H1 (cell line): ENCODE measurements at regions of chr20 and their contacts with region 1.

Region 1: DNA sequence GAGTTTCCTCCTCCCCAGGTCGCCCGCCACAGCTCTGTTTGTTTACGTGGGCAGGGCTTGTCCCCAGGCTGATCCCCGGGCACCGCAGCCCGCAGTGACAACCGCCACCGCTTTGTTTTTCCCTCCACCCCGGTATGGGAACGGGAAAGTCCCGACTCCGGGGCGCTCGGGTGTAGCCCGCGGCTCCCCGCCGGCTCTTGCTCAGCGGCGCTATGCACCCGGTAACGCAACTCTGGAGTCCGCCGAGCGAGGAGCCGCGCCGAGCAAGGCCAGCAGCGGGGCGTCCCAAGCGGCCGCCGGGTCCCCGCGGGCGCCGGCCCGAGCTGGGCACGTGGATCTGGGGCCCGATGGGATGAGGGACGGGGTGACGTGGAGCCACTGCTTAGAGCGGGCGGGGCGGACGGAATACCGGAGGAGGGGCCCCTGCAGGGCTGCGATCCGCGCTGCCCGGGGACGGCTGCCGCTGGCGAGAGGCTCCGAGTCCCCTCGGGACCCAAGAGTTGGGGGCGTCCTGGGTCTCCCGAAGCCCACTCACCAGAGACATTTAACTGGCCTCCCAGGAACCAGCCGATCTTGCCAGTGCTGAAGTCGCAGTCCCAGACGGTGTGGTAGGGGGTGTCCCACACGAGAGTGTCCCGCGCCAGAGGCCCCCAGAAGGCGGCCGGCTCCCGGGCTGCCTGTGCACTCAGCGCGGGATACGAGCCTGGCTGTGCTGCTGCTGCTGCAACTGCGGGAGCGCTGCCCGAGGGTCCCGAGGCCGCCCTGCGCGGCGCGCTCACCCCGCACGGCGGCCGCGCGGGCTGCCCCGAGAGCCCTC is 497 bp downstream of the ACSS1 start:
- DNase-seq: peak in 1 of 2 experiments; percentile 70
- H3K4me3 ChIP-seq: peak overlapping the region; percentile 26 to 64 (median 45)
- H3K27ac ChIP-seq: no peak overlapping the region
- H3K4me1 ChIP-seq: peaks cover 2 to 15% (median 6%) of the 10 kb centered on the region in 4 experiments
- H3K27me3 ChIP-seq: peaks cover 21 to 74% (median 60%) of the 10 kb centered on the region in 4 experiments
- CTCF ChIP-seq: no peak
- EP300 ChIP-seq: no peak
- POLR2A ChIP-seq: no peak
- RAD21 ChIP-seq: no peak

Region 2: GRCh38 chr20:25077610-25078169 is 20.2 kb after region 1 on chr20:
- CTCF ChIA-PET with region 1: interaction called, 12 read pairs
- POLR2A ChIA-PET with region 1: no interaction called
- DNase-seq: peak in 1 of 2 experiments; percentile 47
- H3K4me3 ChIP-seq: peak overlapping the region; percentile 15 to 51 (median 24); a peak in 7 of 8 replicates
- H3K27ac ChIP-seq: no peak overlapping the region
- H3K4me1 ChIP-seq: peaks cover 0 to 3% (median 0%) of the 10 kb centered on the region in 4 experiments; a peak in 2 of 7 replicates
- H3K27me3 ChIP-seq: peaks cover 29 to 60% (median 55%) of the 10 kb centered on the region in 4 experiments
- CTCF ChIP-seq: no peak
- EP300 ChIP-seq: no peak
- POLR2A ChIP-seq: no peak
- RAD21 ChIP-seq: no peak

Region 3: DNA sequence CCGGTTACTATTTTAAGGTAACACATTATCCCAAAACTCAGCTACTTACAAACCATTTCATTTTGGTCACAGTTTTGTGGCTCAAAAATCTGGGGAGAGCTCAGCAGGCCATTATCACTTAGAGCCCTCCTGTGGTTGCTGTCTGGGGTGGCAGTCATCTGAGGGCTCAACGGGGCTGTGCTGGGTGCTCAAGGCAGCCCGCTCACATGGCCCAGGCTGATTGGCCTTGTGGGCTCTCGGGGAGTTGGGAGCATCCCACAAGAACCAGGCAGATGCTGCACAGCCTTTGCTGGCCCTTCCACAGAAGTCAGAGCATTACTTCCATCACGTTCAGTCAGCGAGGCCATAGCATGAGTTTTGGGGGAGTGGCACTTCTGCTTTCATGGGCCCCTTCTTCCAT is 30.8 kb after region 1 on chr20:
- CTCF ChIA-PET with region 1: no interaction called
- POLR2A ChIA-PET with region 1: no interaction called
- DNase-seq: no peak
- H3K4me3 ChIP-seq: no peak overlapping the region
- H3K27ac ChIP-seq: no peak overlapping the region
- H3K4me1 ChIP-seq: peaks cover 0 to 10% (median 4%) of the 10 kb centered on the region in 4 experiments; a peak in 5 of 7 replicates
- H3K27me3 ChIP-seq: peaks cover 31 to 51% (median 41%) of the 10 kb centered on the region in 4 experiments
- CTCF ChIP-seq: no peak
- EP300 ChIP-seq: no peak
- POLR2A ChIP-seq: no peak
- RAD21 ChIP-seq: no peak

Region 4: GRCh38 chr20:25129908-25130307 is 72.5 kb after region 1 on chr20:
- CTCF ChIA-PET with region 1: no interaction called
- POLR2A ChIA-PET with region 1: no interaction called
- DNase-seq: no peak
- H3K4me3 ChIP-seq: no peak overlapping the region
- H3K27ac ChIP-seq: no peak overlapping the region
- H3K4me1 ChIP-seq: no peaks in the 10 kb centered on the region
- H3K27me3 ChIP-seq: no peaks in the 10 kb centered on the region
- CTCF ChIP-seq: peak; percentile 25 to 47 (median 29)
- EP300 ChIP-seq: no peak
- POLR2A ChIP-seq: no peak
- RAD21 ChIP-seq: peak in 1 of 2 experiments; percentile 36; a peak in 1 of 4 replicates